ENCODE measurements at regions of chr1 and their contacts with region 1.

Region 1: GRCh38 chr1:23424293-23425192 is at the start of gene TCEA3:
- DNase-seq: peak in 1 of 2 donors; percentile 85
- H3K4me3 ChIP-seq: peak within 1 kb of the TSS; percentile 65 to 68
- H3K27ac ChIP-seq: peak within 1 kb of the TSS; percentile 74 to 83
- H3K4me1 ChIP-seq: peaks cover 0 to 25% (median 21%) of the 10 kb centered on the region in 4 donors
- H3K27me3 ChIP-seq: no peaks in the 10 kb centered on the region
- CTCF ChIP-seq: no peak

Region 2: DNA sequence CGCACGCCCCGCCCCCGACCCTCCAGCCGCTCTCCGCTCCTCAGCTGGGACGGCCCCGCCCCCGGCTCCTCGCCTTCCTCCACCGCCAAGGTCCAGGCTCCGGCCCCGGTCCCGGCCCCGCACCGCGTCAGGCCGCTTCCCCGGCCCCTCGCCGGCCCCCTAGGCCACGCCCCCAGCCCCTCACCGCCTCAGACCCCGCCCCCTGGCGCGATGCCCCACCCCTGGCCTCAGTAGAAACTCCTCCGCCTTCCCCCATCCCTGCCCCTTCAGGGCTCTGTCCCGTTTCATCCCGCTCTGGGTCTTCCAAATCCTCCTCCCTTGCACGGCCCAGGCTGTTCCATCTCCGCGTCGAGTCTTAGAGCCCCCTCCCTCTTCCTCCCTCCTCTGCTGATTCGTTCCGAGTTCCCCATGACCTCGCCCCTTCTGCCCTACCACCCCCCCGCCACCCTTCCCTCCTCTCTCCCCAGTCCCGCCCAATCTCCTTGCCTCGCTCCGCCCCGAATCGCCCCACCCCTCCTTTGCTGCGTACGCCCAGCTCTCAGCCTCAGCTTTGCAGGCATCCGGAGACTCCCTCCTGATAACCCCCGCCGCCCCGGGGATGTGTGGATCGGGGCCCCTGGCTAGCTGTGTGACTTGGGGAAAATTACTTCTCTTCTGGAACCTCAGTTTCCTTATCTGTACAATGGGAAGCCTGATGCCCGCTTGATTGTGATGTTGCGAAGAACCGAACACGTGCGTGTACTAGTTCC is 59.9 kb after region 1 on chr1:
- intact Hi-C with region 1: loop called (anchors 5 kb)
- DNase-seq: peak; percentile 93 to 96
- H3K4me3 ChIP-seq: peak overlapping the region; percentile 81 to 88
- H3K27ac ChIP-seq: peak overlapping the region; percentile 84 to 90
- H3K4me1 ChIP-seq: peaks cover 0 to 34% (median 11%) of the 10 kb centered on the region in 4 donors
- H3K27me3 ChIP-seq: no peaks in the 10 kb centered on the region
- CTCF ChIP-seq: no peak

Region 3: DNA sequence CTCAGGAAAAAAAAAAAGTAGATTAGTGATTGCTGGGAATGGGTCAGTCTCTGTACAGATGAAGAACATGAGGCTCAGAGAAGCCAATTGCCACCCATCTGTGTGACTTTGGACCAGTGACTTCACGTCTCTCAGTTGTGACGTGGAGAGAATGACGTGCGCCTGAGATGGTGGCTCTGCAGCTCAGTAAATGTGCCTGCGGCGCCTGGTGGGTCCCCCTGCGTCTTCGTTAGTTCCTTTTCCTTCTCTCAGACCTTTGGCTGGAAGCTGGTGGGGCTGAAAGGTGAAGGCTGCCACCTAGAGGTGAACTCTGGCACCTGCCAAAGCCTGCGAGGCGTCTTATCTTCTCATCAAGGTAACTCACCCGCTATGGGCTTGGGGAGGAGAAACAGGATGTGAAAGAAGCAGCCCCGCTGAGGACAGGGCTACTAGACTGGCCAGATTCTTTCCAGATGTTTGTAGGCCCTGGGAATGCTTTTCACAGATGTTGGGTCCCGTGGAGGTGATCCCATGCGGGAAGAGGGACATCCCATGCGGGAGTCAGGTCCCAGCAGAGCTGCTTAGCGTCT is 115.2 kb after region 1 on chr1:
- intact Hi-C with region 1: no loop called
- DNase-seq: peak; percentile 76 to 90
- H3K4me3 ChIP-seq: peak overlapping the region in 1 of 2 donors; percentile 24
- H3K27ac ChIP-seq: no peak overlapping the region
- H3K4me1 ChIP-seq: peaks cover 0 to 12% (median 9%) of the 10 kb centered on the region in 4 donors
- H3K27me3 ChIP-seq: no peaks in the 10 kb centered on the region
- CTCF ChIP-seq: peak; percentile 92 to 93